GM12878 (cell line): ENCODE measurements at regions of chr14 and their contacts with region 1.

Region 1: DNA sequence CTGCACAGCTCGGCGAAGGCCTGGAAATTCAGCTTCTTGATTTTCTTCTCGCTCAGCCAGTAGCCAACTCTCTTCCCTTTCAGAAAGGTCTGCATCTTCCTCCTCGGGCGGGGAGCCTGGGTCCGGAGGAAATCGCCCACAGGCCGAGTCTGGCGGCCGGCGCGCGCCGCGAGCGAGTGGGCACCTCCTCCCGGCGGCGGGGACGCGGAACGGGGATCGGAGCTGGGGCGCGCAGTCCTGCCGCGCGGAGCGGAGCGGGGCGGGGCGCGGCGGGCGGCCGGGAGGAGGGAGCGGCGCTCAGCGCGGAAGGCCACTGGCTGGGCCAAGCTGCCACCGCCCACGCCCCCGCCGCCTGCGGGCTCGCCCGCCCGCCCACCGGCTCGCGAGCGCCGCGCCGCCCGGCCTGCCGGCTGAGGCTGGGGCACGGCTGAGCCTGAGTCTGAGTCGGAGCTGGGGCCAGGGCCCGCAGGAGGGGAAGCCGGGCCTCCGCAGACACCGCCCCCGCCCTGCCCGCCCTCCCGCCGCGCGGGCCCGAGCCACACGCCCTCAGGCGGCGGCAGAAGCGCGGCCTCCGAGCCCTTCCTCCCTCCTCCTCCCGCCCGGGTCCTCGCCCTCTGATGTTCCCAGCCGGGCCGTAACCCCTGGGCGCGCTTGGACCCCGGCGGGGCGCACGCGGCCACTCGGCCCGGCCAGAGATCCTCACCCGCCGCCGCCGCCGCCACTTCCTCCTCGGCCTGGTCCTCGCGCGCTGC is 480 bp downstream of the ITPK1 start:
- DNase-seq: peak; percentile 33
- ATAC-seq: peak; percentile 79
- H3K4me3 ChIP-seq: peak overlapping the region; percentile 99
- H3K27ac ChIP-seq: peak overlapping the region; percentile 38
- H3K4me1 ChIP-seq: peaks cover 13% of the 10 kb centered on the region
- H3K27me3 ChIP-seq: no peaks in the 10 kb centered on the region
- CTCF ChIP-seq: peak in 1 of 3 experiments; percentile 1; a peak in 1 of 6 replicates
- EP300 ChIP-seq: no peak
- POLR2A ChIP-seq: peak; percentile 66; the same call in 1 of the 2 replicates
- RAD21 ChIP-seq: no peak

Region 2: GRCh38 chr14:92646952-92647796 is 468.1 kb before region 1 on chr14:
- CTCF ChIA-PET with region 1: no interaction called
- POLR2A ChIA-PET with region 1: no interaction called
- RAD21 ChIA-PET with region 1: no interaction called
- SMC1A ChIA-PET with region 1: no interaction called
- in situ Hi-C with region 1: no loop called
- intact Hi-C with region 1: no loop called
- DNase-seq: no peak
- ATAC-seq: no peak
- H3K4me3 ChIP-seq: no peak overlapping the region
- H3K27ac ChIP-seq: peak overlapping the region; percentile 18; the same call in 1 of the 2 replicates
- H3K4me1 ChIP-seq: peaks cover 34% of the 10 kb centered on the region
- H3K27me3 ChIP-seq: no peaks in the 10 kb centered on the region
- CTCF ChIP-seq: no peak
- EP300 ChIP-seq: no peak
- POLR2A ChIP-seq: no peak
- RAD21 ChIP-seq: no peak

Region 3: DNA sequence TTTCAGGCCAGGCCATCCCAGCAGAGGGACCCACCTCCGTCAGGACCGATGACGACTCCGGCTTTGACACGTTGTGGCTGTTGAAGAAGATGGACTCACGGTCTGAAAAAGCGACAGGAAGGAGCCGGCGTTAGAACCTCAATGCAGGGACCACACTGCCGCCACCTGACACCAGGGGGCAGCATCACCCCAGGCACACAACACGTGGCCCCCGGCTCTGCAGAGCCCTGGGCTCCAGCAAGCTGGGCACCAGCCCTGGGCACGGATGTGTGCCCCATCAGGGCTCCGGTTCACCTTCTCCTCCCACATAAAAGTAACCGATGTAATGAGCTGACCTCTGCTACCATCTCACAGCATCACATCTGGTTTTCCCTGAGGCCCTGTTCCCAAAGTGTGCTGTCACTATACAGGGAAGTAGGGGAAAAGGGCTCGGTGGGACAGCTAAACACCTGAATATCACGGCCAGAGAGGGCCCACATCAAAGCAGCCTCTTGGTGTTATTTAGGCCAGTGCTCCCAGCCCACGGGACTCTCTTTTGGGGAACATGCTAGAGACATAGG is 163.3 kb before region 1 on chr14:
- CTCF ChIA-PET with region 1: interaction called, 47 read pairs
- POLR2A ChIA-PET with region 1: no interaction called
- RAD21 ChIA-PET with region 1: interaction called, 20 read pairs
- SMC1A ChIA-PET with region 1: interaction called, 16 read pairs
- in situ Hi-C with region 1: no loop called
- intact Hi-C with region 1: loop called (anchors 1 kb)
- DNase-seq: peak; percentile 37
- ATAC-seq: peak; percentile 100
- H3K4me3 ChIP-seq: no peak overlapping the region
- H3K27ac ChIP-seq: no peak overlapping the region
- H3K4me1 ChIP-seq: no peaks in the 10 kb centered on the region; the same call in 1 of the 2 replicates
- H3K27me3 ChIP-seq: no peaks in the 10 kb centered on the region
- CTCF ChIP-seq: peak; percentile 86 to 97 (median 95); a peak in 5 of 6 replicates
- EP300 ChIP-seq: no peak
- POLR2A ChIP-seq: no peak
- RAD21 ChIP-seq: peak; percentile 94

Region 4: GRCh38 chr14:93068711-93069110 is 46.5 kb before region 1 on chr14:
- CTCF ChIA-PET with region 1: interaction called, 50 read pairs
- POLR2A ChIA-PET with region 1: interaction called, 22 read pairs
- RAD21 ChIA-PET with region 1: interaction called, 32 read pairs
- SMC1A ChIA-PET with region 1: interaction called, 36 read pairs
- in situ Hi-C with region 1: no loop called
- intact Hi-C with region 1: loop called (anchors 2 kb)
- DNase-seq: no peak
- ATAC-seq: no peak
- H3K4me3 ChIP-seq: no peak overlapping the region
- H3K27ac ChIP-seq: no peak overlapping the region
- H3K4me1 ChIP-seq: peaks cover 44% of the 10 kb centered on the region
- H3K27me3 ChIP-seq: no peaks in the 10 kb centered on the region
- CTCF ChIP-seq: no peak
- EP300 ChIP-seq: no peak
- POLR2A ChIP-seq: no peak
- RAD21 ChIP-seq: no peak

Region 5: GRCh38 chr14:93132470-93133065 is 17.3 kb after region 1 on chr14:
- CTCF ChIA-PET with region 1: interaction called, 287 read pairs
- POLR2A ChIA-PET with region 1: interaction called, 9 read pairs
- RAD21 ChIA-PET with region 1: interaction called, 163 read pairs
- SMC1A ChIA-PET with region 1: interaction called, 103 read pairs
- in situ Hi-C with region 1: no loop called
- intact Hi-C with region 1: loop called (anchors 1 kb)
- DNase-seq: no peak
- ATAC-seq: peak; percentile 94
- H3K4me3 ChIP-seq: no peak overlapping the region
- H3K27ac ChIP-seq: no peak overlapping the region
- H3K4me1 ChIP-seq: no peaks in the 10 kb centered on the region
- H3K27me3 ChIP-seq: no peaks in the 10 kb centered on the region
- CTCF ChIP-seq: peak; percentile 51 to 64 (median 62)
- EP300 ChIP-seq: no peak
- POLR2A ChIP-seq: no peak
- RAD21 ChIP-seq: peak; percentile 58

Region 6: GRCh38 chr14:93160353-93160801 is 45.1 kb after region 1 on chr14:
- CTCF ChIA-PET with region 1: interaction called, 50 read pairs
- POLR2A ChIA-PET with region 1: interaction called, 3 read pairs
- RAD21 ChIA-PET with region 1: interaction called, 34 read pairs
- SMC1A ChIA-PET with region 1: interaction called, 30 read pairs
- in situ Hi-C with region 1: no loop called
- intact Hi-C with region 1: loop called (anchors 2 kb)
- DNase-seq: no peak
- ATAC-seq: peak; percentile 48
- H3K4me3 ChIP-seq: no peak overlapping the region
- H3K27ac ChIP-seq: no peak overlapping the region
- H3K4me1 ChIP-seq: no peaks in the 10 kb centered on the region
- H3K27me3 ChIP-seq: no peaks in the 10 kb centered on the region
- CTCF ChIP-seq: peak; percentile 23 to 54 (median 47); a peak in 4 of 6 replicates
- EP300 ChIP-seq: no peak
- POLR2A ChIP-seq: no peak
- RAD21 ChIP-seq: peak; percentile 48

Region 7: DNA sequence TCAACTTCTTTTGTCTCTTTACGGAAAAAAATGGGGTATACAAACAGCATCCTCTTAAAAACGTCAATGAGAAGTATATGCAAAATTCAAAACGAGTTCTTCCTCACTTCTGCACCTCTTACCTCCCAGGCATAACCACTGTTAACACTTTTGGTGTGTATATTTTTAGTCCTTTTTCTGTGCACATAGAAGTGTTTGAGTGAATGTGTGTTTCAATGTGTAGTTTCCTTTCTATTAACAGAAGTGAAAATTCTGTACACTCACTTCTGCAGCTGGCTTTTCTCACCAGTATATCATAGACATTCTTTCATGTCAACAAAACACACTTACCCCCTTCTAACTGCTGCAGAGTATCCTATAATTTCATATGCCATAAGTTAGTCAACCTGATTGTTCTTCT is 97.2 kb after region 1 on chr14:
- CTCF ChIA-PET with region 1: interaction called, 48 read pairs
- POLR2A ChIA-PET with region 1: interaction called, 3 read pairs
- RAD21 ChIA-PET with region 1: interaction called, 55 read pairs
- SMC1A ChIA-PET with region 1: interaction called, 26 read pairs
- in situ Hi-C with region 1: loop called (anchors 5 kb)
- intact Hi-C with region 1: loop called (anchors 5 kb)
- DNase-seq: peak; percentile 64
- ATAC-seq: peak; percentile 68
- H3K4me3 ChIP-seq: no peak overlapping the region
- H3K27ac ChIP-seq: peak overlapping the region; percentile 81
- H3K4me1 ChIP-seq: peaks cover 25% of the 10 kb centered on the region
- H3K27me3 ChIP-seq: no peaks in the 10 kb centered on the region
- CTCF ChIP-seq: no peak
- EP300 ChIP-seq: peak in 1 of 2 experiments; percentile 70; a peak in 1 of 4 replicates
- POLR2A ChIP-seq: no peak
- RAD21 ChIP-seq: no peak

Region 8: DNA sequence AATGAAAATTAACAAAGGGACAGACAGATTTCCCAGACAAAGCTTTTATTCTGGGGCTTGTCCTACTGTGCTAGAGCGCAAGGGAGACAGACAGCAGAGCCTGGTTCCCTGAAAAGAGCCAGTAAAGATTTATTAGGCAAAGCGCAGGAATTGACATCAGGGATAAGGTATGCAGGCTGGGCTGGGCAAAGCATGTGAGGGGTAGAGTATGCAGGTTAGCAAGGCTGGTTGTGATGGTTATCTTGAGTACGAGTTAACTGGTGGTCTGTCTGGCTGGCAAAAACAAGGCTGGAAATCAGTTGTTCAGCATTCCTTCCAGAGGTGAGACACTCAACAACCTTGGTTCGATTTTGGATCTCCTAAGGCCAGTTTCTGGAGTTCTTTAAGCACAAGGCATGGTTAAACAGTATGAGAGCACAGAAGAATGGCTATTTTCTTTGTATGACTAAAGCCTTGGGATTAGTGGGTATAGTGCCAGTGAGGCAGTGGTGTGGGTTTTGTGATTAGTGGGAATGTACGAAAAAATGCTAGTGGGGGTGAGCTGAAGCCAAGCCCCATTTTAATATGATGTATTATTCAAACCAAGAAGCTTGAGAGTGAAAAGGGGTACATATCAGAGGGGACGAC is 186.7 kb after region 1 on chr14:
- CTCF ChIA-PET with region 1: no interaction called
- POLR2A ChIA-PET with region 1: no interaction called
- RAD21 ChIA-PET with region 1: no interaction called
- SMC1A ChIA-PET with region 1: no interaction called
- in situ Hi-C with region 1: no loop called
- intact Hi-C with region 1: no loop called
- DNase-seq: no peak
- ATAC-seq: no peak
- H3K4me3 ChIP-seq: no peak overlapping the region
- H3K27ac ChIP-seq: no peak overlapping the region
- H3K4me1 ChIP-seq: no peaks in the 10 kb centered on the region
- H3K27me3 ChIP-seq: no peaks in the 10 kb centered on the region
- CTCF ChIP-seq: no peak
- EP300 ChIP-seq: no peak
- POLR2A ChIP-seq: no peak
- RAD21 ChIP-seq: no peak